ENCODE measurements at regions of chr1 and their contacts with region 1.

Region 1: GRCh38 chr1:20661207-20662109 is at the start of gene DDOST:
- DNase-seq: peak; percentile 94
- H3K4me3 Mint-ChIP-seq: peak within 1 kb of the TSS; percentile 97
- H3K27ac Mint-ChIP-seq: peak within 1 kb of the TSS; percentile 97
- H3K4me1 Mint-ChIP-seq: peaks cover 45% of the 10 kb centered on the region
- H3K27me3 Mint-ChIP-seq: no peaks in the 10 kb centered on the region
- total RNA-seq, gene DDOST: 167 and 174 TPM in 2 replicates

Region 2: DNA sequence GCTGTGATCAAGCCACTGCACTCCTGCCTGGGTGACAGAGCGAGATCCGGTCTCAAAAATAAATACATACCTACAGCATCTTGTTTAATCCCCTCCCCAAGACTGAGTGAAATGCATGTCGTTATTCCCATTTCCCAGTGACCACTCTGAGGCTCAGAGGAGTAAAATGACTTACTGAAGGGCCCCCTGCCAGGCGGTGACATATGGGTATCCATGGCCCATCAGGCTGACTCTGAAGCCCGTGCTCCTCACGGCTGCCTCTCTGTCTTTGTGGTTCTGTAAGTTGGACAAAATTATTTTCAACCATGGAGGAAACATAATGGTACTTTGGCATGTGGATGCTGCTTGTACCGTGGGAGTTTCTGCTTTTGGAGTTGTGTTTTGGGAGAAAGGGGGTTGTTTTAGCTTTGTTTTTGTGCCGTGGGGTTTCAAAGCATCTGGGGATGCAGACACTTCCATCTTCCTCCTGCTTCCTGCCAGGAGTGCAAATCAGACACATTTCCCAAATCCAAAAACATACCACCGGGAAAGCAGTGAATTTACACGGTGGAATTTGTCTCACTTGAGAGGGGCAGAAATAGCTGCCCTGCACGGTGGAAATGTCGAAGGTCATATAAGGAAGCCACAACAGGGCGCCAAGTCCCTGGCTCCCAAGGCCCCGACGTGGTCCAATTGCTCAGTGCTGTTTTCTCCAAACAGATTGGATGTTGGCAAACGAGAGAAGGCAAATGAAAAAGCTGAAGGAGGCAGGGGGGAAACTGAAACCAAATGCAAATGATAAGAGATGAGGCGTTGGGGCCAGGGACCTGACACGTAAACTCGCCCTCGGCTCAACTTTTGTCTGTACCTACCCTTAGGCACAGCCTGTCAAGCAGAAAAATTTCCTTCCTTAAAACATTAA is 45.3 kb before region 1 on chr1:
- intact Hi-C with region 1: no loop called
- DNase-seq: no peak
- H3K4me3 Mint-ChIP-seq: no peak overlapping the region
- H3K27ac Mint-ChIP-seq: no peak overlapping the region
- H3K4me1 Mint-ChIP-seq: peaks cover 6% of the 10 kb centered on the region
- H3K27me3 Mint-ChIP-seq: peaks cover 2% of the 10 kb centered on the region

Region 3: GRCh38 chr1:20633190-20634064 is 28.0 kb before region 1 on chr1 and contains the start of gene PINK1:
- intact Hi-C with region 1: loop called (anchors 1 kb)
- DNase-seq: peak; percentile 85
- H3K4me3 Mint-ChIP-seq: peak within 1 kb of the TSS; percentile 83
- H3K27ac Mint-ChIP-seq: peak within 1 kb of the TSS; percentile 48
- H3K4me1 Mint-ChIP-seq: peaks cover 10% of the 10 kb centered on the region
- H3K27me3 Mint-ChIP-seq: peaks cover 1% of the 10 kb centered on the region
- total RNA-seq, gene PINK1: 2.6 and 3.3 TPM in 2 replicates

Region 4: GRCh38 chr1:20678599-20678998 is 17.1 kb after region 1 on chr1:
- intact Hi-C with region 1: no loop called
- DNase-seq: no peak
- H3K4me3 Mint-ChIP-seq: no peak overlapping the region
- H3K27ac Mint-ChIP-seq: no peak overlapping the region
- H3K4me1 Mint-ChIP-seq: peaks cover 7% of the 10 kb centered on the region
- H3K27me3 Mint-ChIP-seq: peaks cover 42% of the 10 kb centered on the region

Region 5: DNA sequence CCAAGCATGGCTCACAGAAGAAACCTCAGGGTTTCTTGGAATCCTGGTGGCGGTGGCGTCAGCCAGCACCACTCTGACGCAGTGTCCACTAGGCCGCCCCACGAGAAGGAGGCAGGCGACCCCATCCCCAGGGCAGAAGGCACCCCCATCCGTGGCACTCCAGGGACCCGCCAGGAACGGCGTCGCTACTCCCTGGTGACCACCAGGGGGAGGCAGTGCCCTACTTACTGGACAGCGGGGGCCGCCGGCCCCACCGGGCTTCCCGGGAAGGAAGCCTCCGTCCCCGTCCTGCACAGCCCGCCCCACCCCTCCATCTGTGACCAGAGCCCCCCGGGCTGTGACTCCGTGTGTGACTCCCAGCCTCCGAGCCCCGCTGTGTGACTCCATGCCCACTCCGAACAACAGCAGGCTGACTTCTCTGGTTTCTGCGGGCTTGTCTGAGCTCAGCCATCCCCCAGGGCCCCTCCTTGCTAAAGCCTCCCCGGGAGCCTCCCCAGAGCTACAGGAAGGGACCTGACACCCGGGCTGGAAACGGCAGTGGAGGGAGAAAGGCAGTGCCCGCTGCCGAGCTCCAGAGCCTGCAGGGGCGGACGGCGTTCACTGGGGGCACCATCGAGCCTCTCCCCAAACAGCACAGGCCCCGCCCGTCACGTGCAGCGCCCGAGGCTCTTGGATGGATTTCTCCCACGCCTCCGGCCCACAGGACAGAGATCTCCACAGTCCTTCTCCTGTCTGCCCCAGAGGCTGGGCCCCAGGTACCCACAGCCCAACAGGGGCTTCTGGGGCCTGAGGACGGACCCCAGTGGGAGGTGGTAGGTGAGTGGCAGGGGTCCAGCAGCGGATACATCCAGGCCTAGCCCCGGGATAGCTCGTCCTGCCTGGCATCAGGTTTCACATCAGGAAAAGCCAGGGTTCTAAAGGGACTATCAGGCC is 35.2 kb after region 1 on chr1:
- intact Hi-C with region 1: loop called (anchors 1 kb)
- DNase-seq: peak; percentile 51
- H3K4me3 Mint-ChIP-seq: peak overlapping the region; percentile 84
- H3K27ac Mint-ChIP-seq: no peak overlapping the region
- H3K4me1 Mint-ChIP-seq: peaks cover 12% of the 10 kb centered on the region
- H3K27me3 Mint-ChIP-seq: peaks cover 6% of the 10 kb centered on the region

Region 6: DNA sequence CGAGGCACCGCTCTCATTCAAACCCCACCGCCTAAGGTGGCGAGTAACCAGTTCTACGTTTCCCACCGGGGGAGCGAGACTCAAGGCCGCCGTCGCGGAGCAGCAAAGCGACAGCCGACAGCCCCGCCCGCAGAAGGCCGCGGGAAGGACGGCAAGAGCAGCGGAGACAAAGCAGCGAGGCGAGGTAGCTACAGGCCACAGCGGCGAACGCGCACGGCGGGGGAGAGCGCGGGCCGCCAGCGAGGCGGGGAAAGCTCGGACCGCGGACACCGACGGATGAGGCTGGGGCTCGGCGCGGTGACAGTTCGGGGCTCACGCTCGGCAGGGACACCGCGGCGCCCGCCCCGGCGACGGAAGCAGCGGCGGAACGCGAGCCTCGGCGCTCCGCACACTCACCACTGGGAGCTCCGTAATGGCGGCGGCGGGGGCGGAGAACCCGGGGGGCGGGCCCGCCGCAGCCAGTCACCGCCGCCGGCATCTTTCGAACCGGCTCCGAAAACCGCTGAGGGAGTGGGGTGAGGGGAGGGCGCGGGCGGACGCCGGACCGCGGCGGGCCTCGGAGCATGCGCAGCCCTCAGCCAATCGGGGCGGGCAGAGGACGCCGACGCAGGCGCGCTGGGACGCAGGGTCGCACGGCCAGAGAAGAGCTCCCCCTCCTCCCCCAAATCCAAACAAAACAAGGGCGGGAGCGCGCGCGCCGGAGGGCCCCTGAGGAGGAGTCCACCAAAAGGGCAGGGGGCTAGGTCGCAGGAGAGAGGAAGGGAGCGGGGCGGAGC is 125.0 kb after region 1 on chr1:
- intact Hi-C with region 1: loop called (anchors 1 kb)
- DNase-seq: peak; percentile 95
- H3K4me3 Mint-ChIP-seq: peak overlapping the region; percentile 91
- H3K27ac Mint-ChIP-seq: peak overlapping the region; percentile 97
- H3K4me1 Mint-ChIP-seq: peaks cover 26% of the 10 kb centered on the region
- H3K27me3 Mint-ChIP-seq: peaks cover 5% of the 10 kb centered on the region